Adrenal gland (tissue), 19 donors: ENCODE measurements at regions of chr4 and their contacts with region 1.

Region 1: DNA sequence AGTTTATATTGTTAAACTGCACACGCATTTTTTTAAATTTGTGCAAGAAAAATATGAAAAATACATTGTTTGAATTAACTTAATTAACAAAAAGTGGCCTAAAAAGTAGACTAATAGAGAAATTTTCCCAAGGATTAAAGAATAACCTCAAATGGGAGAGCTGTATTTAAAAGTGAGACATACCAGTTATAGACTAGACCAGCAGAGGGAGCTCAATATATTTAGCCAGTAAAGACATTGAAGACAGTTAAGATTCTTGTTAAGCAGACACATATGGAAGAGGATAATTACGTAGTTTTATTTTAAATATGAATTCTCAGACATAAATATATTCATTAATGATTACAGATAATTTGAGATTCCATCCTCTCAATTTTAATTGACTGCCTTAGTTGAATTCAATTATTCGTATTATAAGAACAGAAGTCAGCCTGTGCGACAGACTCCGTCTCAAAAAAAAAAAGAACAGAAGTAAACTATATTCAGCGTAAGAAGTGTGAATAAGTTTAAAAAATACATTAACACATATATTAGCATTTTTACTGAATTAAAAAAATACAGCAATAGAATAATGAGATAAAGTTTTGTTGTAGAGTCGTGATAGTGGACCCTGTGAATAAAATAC is 64.8 kb downstream of the GLRA3 start:
- DNase-seq: no peak
- H3K4me3 ChIP-seq: no peak overlapping the region
- H3K27ac ChIP-seq: no peak overlapping the region
- H3K4me1 ChIP-seq: no peaks in the 10 kb centered on the region
- H3K27me3 ChIP-seq: no peaks in the 10 kb centered on the region
- CTCF ChIP-seq: peak; percentile 34 to 65 (median 44)
- POLR2A ChIP-seq: no peak

Region 2: DNA sequence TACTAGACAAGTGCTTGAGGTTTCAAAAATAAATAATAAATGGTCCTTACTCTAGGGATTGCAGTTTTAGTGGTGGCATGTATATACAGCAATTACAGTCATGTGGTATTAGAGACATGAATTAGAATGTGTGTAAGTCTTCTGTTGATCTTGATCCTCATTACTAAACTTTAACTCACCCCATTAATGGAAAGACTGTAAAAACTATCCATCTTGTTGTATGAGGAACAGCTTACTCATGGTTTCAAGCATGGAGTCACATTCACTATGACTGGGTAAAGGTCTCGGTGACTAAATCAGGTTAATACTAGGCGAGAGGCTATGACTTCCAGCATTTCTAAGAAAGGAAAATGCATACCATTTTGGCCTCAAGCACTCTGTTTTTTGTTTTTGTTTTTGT is 135.0 kb before region 1 on chr4:
- intact Hi-C with region 1: no loop called
- DNase-seq: no peak
- H3K4me3 ChIP-seq: no peak overlapping the region
- H3K27ac ChIP-seq: no peak overlapping the region
- H3K4me1 ChIP-seq: no peaks in the 10 kb centered on the region
- H3K27me3 ChIP-seq: no peaks in the 10 kb centered on the region
- CTCF ChIP-seq: no peak
- POLR2A ChIP-seq: no peak

Region 3: DNA sequence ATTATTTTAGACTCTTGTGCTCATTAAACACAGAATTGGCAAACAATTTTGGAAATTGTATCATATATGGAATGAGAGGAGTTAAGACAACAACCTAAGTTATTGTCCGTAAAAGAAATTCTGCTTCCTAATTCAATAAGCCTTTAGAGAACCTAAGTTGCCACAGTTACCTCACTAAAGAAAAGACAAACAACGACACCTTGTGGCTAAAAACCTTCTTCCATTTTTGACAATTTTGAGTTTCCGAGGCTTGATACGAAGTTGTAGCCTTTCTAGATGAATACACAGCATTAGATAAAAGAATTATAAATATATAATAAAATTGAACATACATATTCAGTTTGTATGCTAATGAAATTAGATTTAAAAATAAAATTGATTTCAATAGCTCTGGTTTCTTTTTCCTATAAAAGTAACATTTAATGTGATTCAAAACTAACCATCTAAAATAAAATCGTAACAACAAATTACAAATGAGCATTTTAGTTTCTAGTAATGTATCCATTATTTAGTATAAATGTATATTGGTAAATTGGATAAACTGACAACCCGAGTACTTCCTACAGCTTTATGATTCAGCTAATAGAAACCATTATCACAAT is 772.7 kb after region 1 on chr4:
- intact Hi-C with region 1: loop called in 1 of 2 experiments (anchors 10 kb)
- DNase-seq: no peak
- H3K4me3 ChIP-seq: no peak overlapping the region
- H3K27ac ChIP-seq: no peak overlapping the region
- H3K4me1 ChIP-seq: no peaks in the 10 kb centered on the region
- H3K27me3 ChIP-seq: no peaks in the 10 kb centered on the region
- CTCF ChIP-seq: peak; percentile 18 to 61 (median 40)
- POLR2A ChIP-seq: no peak